ENCODE measurements at regions of chr11 and their contacts with region 1.

Region 1: DNA sequence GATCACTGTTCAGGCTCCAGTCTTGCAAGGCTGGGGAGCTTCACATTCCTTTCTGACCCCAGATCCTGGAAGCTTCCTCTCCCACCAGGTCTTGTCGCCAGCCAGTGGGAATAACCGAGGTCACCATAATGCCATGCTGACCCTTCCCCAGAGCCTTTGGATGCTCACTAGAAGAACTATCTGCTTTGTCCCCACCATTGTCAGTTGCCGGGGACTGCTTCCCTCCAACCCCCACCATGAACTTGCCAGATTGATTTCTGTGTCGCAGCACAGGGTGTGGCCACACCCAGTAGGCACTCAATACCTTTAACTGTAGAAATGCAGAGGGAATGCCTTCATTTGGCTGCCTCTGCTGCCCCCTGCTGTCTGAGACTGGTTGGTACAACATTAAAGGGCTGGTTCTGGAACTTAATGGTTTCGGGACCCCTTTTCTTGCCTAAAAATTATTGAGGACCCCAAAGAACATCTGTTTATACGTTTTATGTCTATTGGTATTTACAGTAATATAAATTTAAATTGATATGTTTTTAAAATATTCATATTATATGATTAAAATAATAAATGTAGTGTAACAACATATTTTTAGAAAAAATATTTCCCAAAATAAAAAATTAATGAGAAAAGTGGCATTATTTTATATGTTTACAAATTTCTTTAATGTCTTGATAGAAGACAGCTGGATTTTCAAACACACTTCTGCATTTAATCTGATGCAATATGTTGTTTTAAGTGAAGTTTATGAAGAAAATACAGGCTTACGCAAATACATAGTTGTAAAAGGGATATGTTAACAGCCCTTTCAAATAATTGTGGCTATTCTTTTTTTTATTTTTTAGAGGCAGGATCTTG is 6.7 kb upstream of the GDPD5 start:
- DNase-seq: peak; percentile 72 to 76
- H3K4me3 ChIP-seq: no peak overlapping the region
- H3K27ac ChIP-seq: no peak overlapping the region
- H3K4me1 ChIP-seq: peaks cover 28% of the 10 kb centered on the region
- H3K27me3 ChIP-seq: no peaks in the 10 kb centered on the region
- CTCF ChIP-seq: peak; percentile 99

Region 2: DNA sequence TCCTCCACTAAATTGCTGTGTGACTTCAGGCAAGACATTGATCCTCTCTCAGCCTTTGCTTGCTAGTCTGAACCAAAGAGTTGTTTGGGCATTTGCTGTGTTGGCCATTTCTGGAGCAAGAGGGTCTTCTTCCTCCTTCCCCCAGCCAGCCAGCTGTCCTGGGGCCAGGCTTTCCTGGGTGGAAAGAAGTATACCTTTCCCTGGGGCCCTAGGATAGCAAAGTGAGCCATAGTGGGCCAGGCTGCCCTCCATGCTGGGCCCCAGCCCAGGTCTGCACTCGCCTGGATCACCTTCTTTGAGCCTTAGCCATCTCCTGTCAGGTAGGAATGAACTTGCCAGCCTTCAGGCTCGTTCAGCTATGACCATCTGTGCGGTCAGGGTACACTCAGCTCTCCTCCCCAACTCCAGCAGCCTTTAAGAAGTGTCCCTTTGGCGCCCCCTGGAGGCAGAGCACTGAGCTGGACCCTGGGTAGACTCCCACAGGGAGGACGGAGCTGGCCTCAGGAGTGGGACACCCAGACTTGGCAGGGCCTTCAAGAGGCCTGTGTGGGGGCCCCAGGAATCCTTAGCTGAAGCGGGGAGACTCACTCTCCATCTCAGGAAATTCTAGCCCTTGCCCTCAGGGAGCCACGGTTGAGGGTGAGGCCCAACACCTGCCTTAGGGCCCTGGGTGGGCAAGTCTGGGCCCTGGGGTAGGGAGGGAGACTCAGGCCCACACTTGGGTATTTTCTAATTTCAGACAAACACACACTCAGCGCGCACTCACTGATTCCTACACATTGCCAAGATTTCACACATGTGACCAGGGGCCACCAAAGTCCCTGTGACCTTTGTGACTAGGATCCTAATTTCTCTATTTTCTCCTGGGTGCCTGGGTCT is 327.5 kb before region 1 on chr11:
- CTCF ChIA-PET with region 1: no interaction called
- POLR2A ChIA-PET with region 1: no interaction called
- intact Hi-C with region 1: no loop called
- DNase-seq: peak; percentile 60 to 80
- H3K4me3 ChIP-seq: no peak overlapping the region
- H3K27ac ChIP-seq: no peak overlapping the region
- H3K4me1 ChIP-seq: no peaks in the 10 kb centered on the region
- H3K27me3 ChIP-seq: peaks cover 75% of the 10 kb centered on the region
- CTCF ChIP-seq: peak; percentile 95

Region 3: DNA sequence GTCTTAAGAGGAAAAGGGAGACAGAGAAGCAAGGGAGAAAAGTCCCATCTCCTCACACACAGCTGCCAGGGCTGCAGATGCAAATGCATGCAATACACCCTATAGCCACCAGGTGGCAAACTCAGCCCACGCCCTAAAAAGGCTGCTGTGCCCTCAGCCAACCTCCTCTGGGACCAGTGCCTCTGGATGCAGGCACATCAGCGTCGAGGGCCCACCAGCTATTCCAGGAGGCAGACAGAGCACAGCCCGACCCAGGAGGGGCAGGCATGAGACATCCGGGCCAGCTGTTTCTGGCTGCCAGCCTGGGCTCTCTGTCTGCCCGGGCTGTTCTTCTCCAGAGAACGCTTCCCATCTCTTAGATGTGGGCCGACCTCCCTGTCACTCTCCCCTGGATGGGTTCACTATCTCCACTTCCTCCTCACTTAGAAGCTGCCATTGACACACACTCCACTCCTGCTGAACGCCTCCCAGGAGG is 252.2 kb before region 1 on chr11:
- CTCF ChIA-PET with region 1: no interaction called
- POLR2A ChIA-PET with region 1: no interaction called
- intact Hi-C with region 1: loop called (anchors 1 kb)
- DNase-seq: peak; percentile 48 to 73
- H3K4me3 ChIP-seq: no peak overlapping the region
- H3K27ac ChIP-seq: no peak overlapping the region
- H3K4me1 ChIP-seq: no peaks in the 10 kb centered on the region
- H3K27me3 ChIP-seq: no peaks in the 10 kb centered on the region
- CTCF ChIP-seq: peak; percentile 98

Region 4: DNA sequence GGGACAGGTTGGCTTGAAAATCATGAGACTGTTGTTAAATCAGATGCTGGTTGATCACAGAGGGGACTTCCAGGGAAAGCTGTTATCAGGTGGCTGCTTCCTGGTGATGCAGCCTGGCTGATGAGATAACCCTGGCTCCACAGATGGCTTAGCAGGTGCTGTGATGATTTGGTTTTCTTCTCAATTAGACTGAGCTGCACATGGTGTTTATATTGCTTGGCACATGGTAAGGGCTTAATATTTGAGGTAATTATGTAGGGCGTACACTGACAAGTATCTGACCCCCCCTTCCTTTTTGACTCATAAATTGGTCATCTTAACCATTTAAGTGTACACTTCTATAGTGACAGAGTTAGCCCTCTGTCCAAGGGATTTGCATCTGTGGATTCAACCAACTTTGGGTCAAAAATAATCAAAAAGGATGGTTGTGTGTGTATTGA is 126.1 kb before region 1 on chr11:
- CTCF ChIA-PET with region 1: interaction called, 3 read pairs
- POLR2A ChIA-PET with region 1: no interaction called
- intact Hi-C with region 1: loop called (anchors 5 kb)
- DNase-seq: no peak
- H3K4me3 ChIP-seq: no peak overlapping the region
- H3K27ac ChIP-seq: no peak overlapping the region; the same call in 1 of the 2 replicates
- H3K4me1 ChIP-seq: peaks cover 26% of the 10 kb centered on the region
- H3K27me3 ChIP-seq: no peaks in the 10 kb centered on the region
- CTCF ChIP-seq: no peak

Region 5: GRCh38 chr11:75445315-75445953 is 87.0 kb before region 1 on chr11:
- CTCF ChIA-PET with region 1: interaction called, 5 read pairs
- POLR2A ChIA-PET with region 1: no interaction called
- intact Hi-C with region 1: loop called (anchors 1 kb)
- DNase-seq: peak in 1 of 2 experiments; percentile 74
- H3K4me3 ChIP-seq: no peak overlapping the region
- H3K27ac ChIP-seq: no peak overlapping the region
- H3K4me1 ChIP-seq: no peaks in the 10 kb centered on the region
- H3K27me3 ChIP-seq: no peaks in the 10 kb centered on the region; the same call in 1 of the 2 replicates
- CTCF ChIP-seq: peak; percentile 100

Region 6: DNA sequence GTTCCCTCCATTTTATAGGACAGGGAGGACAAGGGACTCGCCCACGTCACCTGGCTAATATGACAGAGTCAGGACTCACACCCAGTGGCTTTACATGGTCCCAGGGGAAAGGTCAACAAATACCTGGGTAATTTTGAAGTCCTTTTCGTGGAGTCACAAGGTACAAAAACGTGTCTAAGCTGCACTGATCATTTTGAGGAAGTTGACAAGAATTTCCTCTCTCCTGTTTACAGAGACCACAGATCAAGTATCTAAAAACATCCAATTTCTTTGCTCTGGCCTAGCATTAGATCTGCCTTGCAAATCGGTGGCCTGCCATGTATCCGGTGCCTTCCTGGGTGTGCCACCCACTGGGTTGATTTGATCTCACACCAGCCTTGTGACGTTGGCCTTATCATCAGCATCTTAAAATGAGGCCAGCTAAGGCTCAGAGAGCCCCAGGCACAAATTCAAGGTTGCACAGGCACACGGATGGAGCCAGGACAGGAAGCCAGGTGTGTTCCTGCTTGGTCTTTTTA is 24.3 kb before region 1 on chr11:
- CTCF ChIA-PET with region 1: interaction called, 14 read pairs
- POLR2A ChIA-PET with region 1: no interaction called
- intact Hi-C with region 1: no loop called
- DNase-seq: peak in 1 of 2 experiments; percentile 54
- H3K4me3 ChIP-seq: no peak overlapping the region
- H3K27ac ChIP-seq: no peak overlapping the region
- H3K4me1 ChIP-seq: peaks cover 15% of the 10 kb centered on the region
- H3K27me3 ChIP-seq: no peaks in the 10 kb centered on the region
- CTCF ChIP-seq: no peak

Measured in PC-9 (cell line).